ENCODE measurements at regions of chr3 and their contacts with region 1.

Region 1: GRCh38 chr3:47802734-47803477 is at the start of gene DHX30:
- DNase-seq: peak; percentile 91
- ATAC-seq: peak; percentile 91
- H3K4me3 ChIP-seq: peak within 1 kb of the TSS; percentile 57 to 84 (median 78)
- H3K4me3 Mint-ChIP-seq: peak within 1 kb of the TSS; percentile 95
- H3K27ac ChIP-seq: peak within 1 kb of the TSS; percentile 66 to 90
- H3K27ac Mint-ChIP-seq: peak within 1 kb of the TSS; percentile 92
- H3K4me1 ChIP-seq: peaks cover 8 to 13% of the 10 kb centered on the region in 2 donors
- H3K4me1 Mint-ChIP-seq: peaks cover 12% of the 10 kb centered on the region
- H3K27me3 ChIP-seq: no peaks in the 10 kb centered on the region
- H3K27me3 Mint-ChIP-seq: no peaks in the 10 kb centered on the region
- CTCF ChIP-seq: no peak
- total RNA-seq, gene DHX30: 81.8 and 88.9 TPM in 2 replicates

Region 2: DNA sequence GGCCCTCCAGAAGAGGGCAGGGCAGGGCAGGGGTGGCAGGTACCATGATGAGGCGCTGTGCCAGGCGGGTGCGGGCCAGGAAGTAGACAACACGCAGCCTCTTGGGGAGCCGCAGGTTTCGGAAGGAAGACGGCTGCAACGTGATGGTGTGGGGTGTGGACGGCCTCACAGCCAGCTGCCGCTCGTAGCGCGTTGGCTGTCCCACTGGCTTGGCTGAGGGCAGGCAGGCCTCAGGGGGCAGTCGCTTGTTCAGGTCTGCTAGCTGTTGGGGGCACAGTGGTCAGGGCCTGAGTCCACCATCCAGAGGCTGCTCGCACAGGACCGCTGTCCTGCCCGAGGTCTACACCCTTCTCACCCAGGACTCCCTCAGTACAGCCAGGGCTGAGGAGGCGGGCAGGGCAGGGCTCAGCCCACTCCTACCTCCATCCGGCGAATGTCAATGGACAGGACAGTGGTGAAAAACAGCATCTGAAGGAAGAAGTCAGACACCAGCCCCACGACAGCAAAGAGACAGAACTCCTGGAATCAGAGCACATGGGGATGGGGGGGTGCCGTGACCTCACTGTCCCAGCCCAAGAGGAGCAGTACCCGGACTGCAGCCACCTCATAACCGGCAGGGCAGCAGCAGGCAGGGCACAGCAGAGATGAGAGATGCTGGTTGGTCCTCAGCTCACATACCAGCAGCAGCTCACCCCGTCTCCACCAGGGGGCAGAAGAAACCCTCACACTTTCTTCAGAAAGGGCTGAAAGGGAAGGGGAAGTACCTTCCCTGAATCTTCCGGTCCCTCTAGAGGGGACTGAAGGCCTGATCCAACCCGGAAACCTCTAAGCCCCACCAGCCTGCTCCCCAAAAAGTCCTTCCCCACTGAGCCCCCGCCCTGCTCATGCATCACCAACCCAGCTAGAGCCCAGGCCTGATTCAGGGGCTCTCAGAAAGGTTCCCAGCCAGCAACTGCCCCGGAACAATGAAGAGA is 382.1 kb before region 1 on chr3:
- CTCF ChIA-PET with region 1: no interaction called
- POLR2A ChIA-PET with region 1: no interaction called
- intact Hi-C with region 1: loop called (anchors 5 kb)
- DNase-seq: peak; percentile 92
- ATAC-seq: peak; percentile 98
- H3K4me3 ChIP-seq: peak overlapping the region in 2 of 5 experiments; percentile 8 to 9
- H3K4me3 Mint-ChIP-seq: peak overlapping the region; percentile 76
- H3K27ac ChIP-seq: peak overlapping the region; percentile 77 to 87
- H3K27ac Mint-ChIP-seq: peak overlapping the region; percentile 99
- H3K4me1 ChIP-seq: peaks cover 11 to 12% of the 10 kb centered on the region in 2 donors
- H3K4me1 Mint-ChIP-seq: peaks cover 14% of the 10 kb centered on the region
- H3K27me3 ChIP-seq: no peaks in the 10 kb centered on the region
- H3K27me3 Mint-ChIP-seq: no peaks in the 10 kb centered on the region
- CTCF ChIP-seq: peak; percentile 89

Region 3: DNA sequence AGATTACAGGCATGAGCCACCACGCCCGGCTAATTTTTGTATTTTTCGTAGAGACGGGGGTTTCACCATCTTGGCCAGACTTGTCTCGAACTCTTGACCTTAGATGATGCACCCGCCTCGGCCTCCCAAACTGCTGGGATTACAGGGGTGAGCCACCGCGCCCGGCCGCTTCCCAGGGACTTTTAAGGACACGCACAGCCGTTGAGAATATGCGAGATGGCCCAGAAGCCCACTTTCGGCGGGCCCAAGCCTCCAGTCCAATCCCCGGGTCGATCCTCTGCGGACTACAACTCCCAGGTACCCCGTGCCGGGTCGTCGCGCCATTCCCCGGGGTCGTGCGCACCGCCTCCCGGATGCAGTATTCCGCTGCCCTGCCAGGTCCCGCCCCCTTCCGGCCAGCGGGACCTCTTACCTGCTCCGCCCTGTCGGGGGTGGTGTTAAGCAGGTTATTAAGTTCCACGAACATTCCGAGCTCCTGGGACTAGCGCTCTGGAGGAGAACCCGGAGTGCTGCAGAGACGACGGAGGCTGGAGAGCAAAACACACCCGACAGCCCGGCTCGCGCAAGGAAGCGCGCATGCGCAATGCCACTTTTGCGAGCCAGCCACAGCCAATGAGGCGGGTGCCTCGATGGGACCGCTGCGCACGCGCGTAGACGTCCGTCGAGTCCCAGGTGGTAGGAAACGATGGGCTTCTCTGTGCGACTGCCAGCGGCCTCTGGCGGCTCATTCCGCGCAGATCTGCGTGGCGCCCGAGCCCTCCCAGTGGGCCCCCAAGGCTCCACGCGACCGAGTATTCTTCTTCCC is 289.6 kb before region 1 on chr3 and contains the start of gene ELP6:
- CTCF ChIA-PET with region 1: no interaction called
- POLR2A ChIA-PET with region 1: no interaction called
- intact Hi-C with region 1: loop called (anchors 1 kb)
- DNase-seq: peak; percentile 99
- ATAC-seq: peak; percentile 93
- H3K4me3 ChIP-seq: peak within 1 kb of the TSS; percentile 79 to 91 (median 80)
- H3K4me3 Mint-ChIP-seq: peak within 1 kb of the TSS; percentile 99
- H3K27ac ChIP-seq: peak within 1 kb of the TSS; percentile 66 to 76
- H3K27ac Mint-ChIP-seq: peak within 1 kb of the TSS; percentile 99
- H3K4me1 ChIP-seq: peaks cover 0 to 9% of the 10 kb centered on the region in 2 donors
- H3K4me1 Mint-ChIP-seq: peaks cover 16% of the 10 kb centered on the region
- H3K27me3 ChIP-seq: no peaks in the 10 kb centered on the region
- H3K27me3 Mint-ChIP-seq: no peaks in the 10 kb centered on the region
- CTCF ChIP-seq: peak; percentile 67
- total RNA-seq, gene ELP6: 32.0 and 36.7 TPM in 2 replicates

Region 4: DNA sequence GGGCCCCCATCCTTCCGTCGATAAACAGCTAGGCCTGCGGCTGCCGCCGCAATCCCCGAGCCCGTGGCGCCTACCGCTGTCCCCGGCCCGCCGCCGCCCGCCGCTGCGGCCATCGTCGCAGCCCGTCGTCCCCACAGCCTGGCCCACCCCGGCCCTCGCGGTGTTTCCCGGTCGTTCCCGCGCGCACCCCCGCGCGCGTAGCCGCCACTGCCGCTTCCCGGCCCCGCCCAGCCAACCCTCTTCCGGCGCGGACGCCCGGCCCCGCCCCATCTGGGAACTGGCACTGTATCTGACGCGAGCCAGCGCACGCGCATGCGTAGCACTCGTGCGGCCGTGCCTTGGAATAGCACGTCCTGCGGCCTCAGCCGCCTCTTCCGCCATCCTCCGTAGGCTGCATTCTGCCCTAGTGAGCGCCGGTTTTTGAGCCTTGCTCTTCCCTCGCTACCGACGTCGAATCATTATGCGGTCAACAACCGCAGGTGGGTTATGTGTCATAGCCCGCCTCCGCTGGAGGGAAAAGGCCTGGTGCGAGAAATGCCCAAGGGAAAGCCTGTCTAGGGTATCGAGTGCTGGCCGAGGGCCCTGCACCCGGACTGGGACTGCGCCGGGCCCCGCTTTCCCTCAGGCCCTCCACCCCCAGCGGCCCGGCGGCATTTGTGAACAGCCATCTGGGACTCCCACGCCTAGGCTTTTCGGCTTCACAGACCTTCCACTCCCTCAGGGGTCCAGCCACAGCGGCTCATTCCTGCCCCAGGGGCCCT is 21.0 kb before region 1 on chr3 and contains the start of gene SMARCC1:
- CTCF ChIA-PET with region 1: interaction called, 4 read pairs
- POLR2A ChIA-PET with region 1: no interaction called
- intact Hi-C with region 1: loop called (anchors 1 kb)
- DNase-seq: peak; percentile 99
- ATAC-seq: peak; percentile 87
- H3K4me3 ChIP-seq: peak within 1 kb of the TSS; percentile 68 to 94 (median 78)
- H3K4me3 Mint-ChIP-seq: peak within 1 kb of the TSS; percentile 99
- H3K27ac ChIP-seq: peak within 1 kb of the TSS; percentile 91 to 96
- H3K27ac Mint-ChIP-seq: peak within 1 kb of the TSS; percentile 99
- H3K4me1 ChIP-seq: peaks cover 32 to 44% of the 10 kb centered on the region in 2 donors
- H3K4me1 Mint-ChIP-seq: peaks cover 39% of the 10 kb centered on the region
- H3K27me3 ChIP-seq: no peaks in the 10 kb centered on the region
- H3K27me3 Mint-ChIP-seq: no peaks in the 10 kb centered on the region
- CTCF ChIP-seq: no peak
- total RNA-seq, gene SMARCC1: 149 and 155 TPM in 2 replicates

Region 5: GRCh38 chr3:47824541-47825473 is 21.9 kb after region 1 on chr3:
- CTCF ChIA-PET with region 1: interaction called, 7 read pairs
- POLR2A ChIA-PET with region 1: no interaction called
- intact Hi-C with region 1: loop called (anchors 1 kb)
- DNase-seq: peak; percentile 88
- ATAC-seq: peak; percentile 99
- H3K4me3 ChIP-seq: peak overlapping the region; percentile 54 to 95 (median 83)
- H3K4me3 Mint-ChIP-seq: peak overlapping the region; percentile 91
- H3K27ac ChIP-seq: peak overlapping the region; percentile 29 to 69
- H3K27ac Mint-ChIP-seq: peak overlapping the region; percentile 87
- H3K4me1 ChIP-seq: peaks cover 13 to 24% of the 10 kb centered on the region in 2 donors
- H3K4me1 Mint-ChIP-seq: peaks cover 32% of the 10 kb centered on the region
- H3K27me3 ChIP-seq: no peaks in the 10 kb centered on the region
- H3K27me3 Mint-ChIP-seq: no peaks in the 10 kb centered on the region
- CTCF ChIP-seq: peak; percentile 84

Region 6: DNA sequence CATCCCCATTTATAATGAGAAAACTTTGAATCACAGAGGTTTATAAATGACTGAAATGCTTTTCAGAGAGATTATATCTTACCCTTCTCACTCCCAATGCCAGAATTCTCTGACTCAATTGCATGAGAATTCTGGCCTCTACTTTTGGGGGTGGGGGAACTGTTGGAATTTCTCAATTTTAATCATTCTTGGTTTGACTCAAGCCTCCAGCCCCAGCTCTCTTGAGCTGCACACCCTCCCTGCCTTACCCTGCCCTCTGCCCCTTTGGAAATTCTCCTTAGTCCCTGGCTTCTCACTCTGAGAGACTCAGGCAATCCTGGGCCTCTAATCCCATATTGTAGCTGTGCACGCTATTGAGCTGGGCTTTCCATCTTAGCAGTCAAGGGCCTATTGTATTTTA is 482.2 kb after region 1 on chr3:
- CTCF ChIA-PET with region 1: no interaction called
- POLR2A ChIA-PET with region 1: no interaction called
- intact Hi-C with region 1: no loop called
- DNase-seq: no peak
- ATAC-seq: no peak
- H3K4me3 ChIP-seq: no peak overlapping the region
- H3K4me3 Mint-ChIP-seq: no peak overlapping the region
- H3K27ac ChIP-seq: no peak overlapping the region
- H3K27ac Mint-ChIP-seq: no peak overlapping the region
- H3K4me1 ChIP-seq: no peaks in the 10 kb centered on the region
- H3K4me1 Mint-ChIP-seq: peaks cover 6% of the 10 kb centered on the region
- H3K27me3 ChIP-seq: no peaks in the 10 kb centered on the region
- H3K27me3 Mint-ChIP-seq: no peaks in the 10 kb centered on the region
- CTCF ChIP-seq: no peak

Measured in B cell (primary cell).